ENCODE measurements at regions of chr1 and their contacts with region 1.

Region 1: GRCh38 chr1:235367000-235367908 is at the start of gene TBCE:
- DNase-seq: peak; percentile 61 to 89 (median 63)
- ATAC-seq: peak; percentile 99
- H3K4me3 ChIP-seq: peak within 1 kb of the TSS; percentile 90
- H3K4me3 Mint-ChIP-seq: peak within 1 kb of the TSS; percentile 91 to 99 (median 98)
- H3K27ac ChIP-seq: peak within 1 kb of the TSS; percentile 74
- H3K27ac Mint-ChIP-seq: peak within 1 kb of the TSS; percentile 86 to 97 (median 93)
- H3K4me1 ChIP-seq: peaks cover 0 to 11% of the 10 kb centered on the region in 2 donors
- H3K4me1 Mint-ChIP-seq: peaks cover 13 to 41% (median 38%) of the 10 kb centered on the region in 7 donors
- H3K27me3 ChIP-seq: no peaks in the 10 kb centered on the region
- H3K27me3 Mint-ChIP-seq: no peaks in the 10 kb centered on the region
- total RNA-seq, gene TBCE: 16.8 to 26.1 (median 20.6) TPM

Region 2: GRCh38 chr1:235128456-235129328 is 238.6 kb before region 1 on chr1 and contains the start of gene TOMM20:
- CTCF ChIA-PET with region 1: no interaction called
- POLR2A ChIA-PET with region 1: interaction called, 3 read pairs
- intact Hi-C with region 1: loop called in 1 of 2 experiments (anchors 1 kb)
- DNase-seq: peak; percentile 91 to 97 (median 95)
- ATAC-seq: peak; percentile 97
- H3K4me3 ChIP-seq: peak within 1 kb of the TSS; percentile 98
- H3K4me3 Mint-ChIP-seq: peak within 1 kb of the TSS; percentile 88 to 99 (median 96)
- H3K27ac ChIP-seq: peak within 1 kb of the TSS; percentile 94
- H3K27ac Mint-ChIP-seq: peak within 1 kb of the TSS; percentile 93 to 99 (median 98)
- H3K4me1 ChIP-seq: peaks cover 22 to 24% of the 10 kb centered on the region in 2 donors
- H3K4me1 Mint-ChIP-seq: peaks cover 17 to 55% (median 42%) of the 10 kb centered on the region in 7 donors
- H3K27me3 ChIP-seq: no peaks in the 10 kb centered on the region
- H3K27me3 Mint-ChIP-seq: no peaks in the 10 kb centered on the region
- total RNA-seq, gene TOMM20: 88.0 to 124 (median 100) TPM

Region 3: DNA sequence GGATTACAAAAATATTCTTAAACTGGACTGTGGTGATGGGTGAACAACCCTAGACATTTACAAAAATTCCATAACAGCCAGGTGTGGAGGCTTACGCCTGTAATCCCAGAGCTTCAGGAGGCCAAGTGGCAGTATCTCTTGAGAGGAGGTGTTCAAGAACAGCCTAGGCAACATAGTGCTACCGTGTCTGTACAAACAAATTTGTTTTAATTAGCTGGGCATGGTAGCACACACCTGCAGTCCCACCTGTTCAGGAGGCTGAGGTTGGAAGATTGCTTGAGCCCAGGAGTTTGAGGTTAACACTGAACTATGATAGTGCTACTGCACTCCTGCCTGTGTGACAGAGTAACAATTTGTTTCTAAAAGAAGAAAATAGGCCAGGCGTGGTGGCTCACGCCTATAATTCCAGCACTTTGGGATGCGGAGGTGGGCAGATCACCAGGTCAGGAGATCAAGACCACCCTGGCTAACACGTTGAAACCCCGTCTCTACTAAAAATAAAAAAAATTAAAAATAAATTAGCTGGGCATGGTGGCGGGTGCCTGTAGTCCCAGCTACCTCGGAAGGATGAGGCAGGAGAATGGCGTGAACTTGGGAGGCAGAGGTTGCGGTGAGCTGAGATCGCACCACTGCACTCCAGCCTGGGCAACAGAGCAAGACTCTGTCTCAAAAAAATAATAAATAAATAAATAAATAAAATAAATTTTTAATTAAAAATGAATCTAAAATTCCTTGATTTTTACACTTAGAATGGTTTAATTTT is 76.3 kb before region 1 on chr1:
- CTCF ChIA-PET with region 1: no interaction called
- POLR2A ChIA-PET with region 1: interaction called, 3 read pairs
- intact Hi-C with region 1: loop called in 1 of 2 experiments (anchors 2 kb)
- DNase-seq: no peak
- ATAC-seq: no peak
- H3K4me3 ChIP-seq: no peak overlapping the region
- H3K4me3 Mint-ChIP-seq: peak overlapping the region in 1 of 10 donors; percentile 49
- H3K27ac ChIP-seq: no peak overlapping the region
- H3K27ac Mint-ChIP-seq: peak overlapping the region in 5 of 9 donors; percentile 19 to 56 (median 37)
- H3K4me1 ChIP-seq: peaks cover 37 to 47% of the 10 kb centered on the region in 2 donors
- H3K4me1 Mint-ChIP-seq: peaks cover 42 to 83% (median 74%) of the 10 kb centered on the region in 7 donors
- H3K27me3 ChIP-seq: no peaks in the 10 kb centered on the region
- H3K27me3 Mint-ChIP-seq: no peaks in the 10 kb centered on the region

Region 4: DNA sequence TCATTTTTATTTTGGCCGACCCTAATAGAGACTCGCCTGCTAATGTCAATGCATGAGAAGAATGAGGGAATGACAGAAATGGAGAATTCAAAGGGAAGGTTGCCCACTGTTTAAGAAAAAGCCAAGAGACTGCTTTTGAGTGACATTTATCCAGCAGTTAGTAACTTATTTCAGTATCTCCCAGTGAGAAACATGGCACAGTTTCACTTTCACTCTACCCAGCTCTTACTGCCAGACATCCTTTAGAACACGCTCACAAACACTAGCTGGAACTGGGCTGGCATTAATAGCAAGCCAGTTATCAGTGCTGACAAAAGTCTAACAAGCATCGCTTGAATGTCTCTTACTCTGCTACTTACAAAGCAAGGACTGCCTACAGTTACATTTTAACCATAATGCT is 30.4 kb before region 1 on chr1:
- CTCF ChIA-PET with region 1: no interaction called
- POLR2A ChIA-PET with region 1: no interaction called
- intact Hi-C with region 1: loop called in 1 of 2 experiments (anchors 2 kb)
- DNase-seq: peak in 7 of 9 donors; percentile 18 to 58 (median 40)
- ATAC-seq: peak; percentile 84
- H3K4me3 ChIP-seq: peak overlapping the region; percentile 17
- H3K4me3 Mint-ChIP-seq: peak overlapping the region; percentile 34 to 78 (median 72)
- H3K27ac ChIP-seq: peak overlapping the region; percentile 59
- H3K27ac Mint-ChIP-seq: peak overlapping the region; percentile 57 to 93 (median 85)
- H3K4me1 ChIP-seq: peaks cover 10 to 23% of the 10 kb centered on the region in 2 donors
- H3K4me1 Mint-ChIP-seq: peaks cover 15 to 40% (median 24%) of the 10 kb centered on the region in 7 donors
- H3K27me3 ChIP-seq: no peaks in the 10 kb centered on the region
- H3K27me3 Mint-ChIP-seq: no peaks in the 10 kb centered on the region